ENCODE measurements at regions of chr6 and their contacts with region 1.

Region 1: GRCh38 chr6:32933636-32934085 is 7.2 kb downstream of the HLA-DMB start:
- DNase-seq: peak; percentile 80
- ATAC-seq: peak; percentile 68
- H3K4me3 Mint-ChIP-seq: no peak overlapping the region
- H3K27ac Mint-ChIP-seq: no peak overlapping the region
- H3K4me1 Mint-ChIP-seq: peaks cover 16% of the 10 kb centered on the region
- H3K27me3 Mint-ChIP-seq: peaks cover 12% of the 10 kb centered on the region

Region 2: GRCh38 chr6:32838114-32838958 is 95.3 kb before region 1 on chr6 and contains the start of gene TAP2:
- CTCF ChIA-PET with region 1: interaction called, 11 read pairs
- POLR2A ChIA-PET with region 1: no interaction called
- DNase-seq: peak; percentile 98
- ATAC-seq: peak; percentile 85
- H3K4me3 Mint-ChIP-seq: peak within 1 kb of the TSS; percentile 82
- H3K27ac Mint-ChIP-seq: peak within 1 kb of the TSS; percentile 99
- H3K4me1 Mint-ChIP-seq: peaks cover 80% of the 10 kb centered on the region
- H3K27me3 Mint-ChIP-seq: no peaks in the 10 kb centered on the region
- total RNA-seq, gene TAP2: 145 to 159 TPM

Region 3: DNA sequence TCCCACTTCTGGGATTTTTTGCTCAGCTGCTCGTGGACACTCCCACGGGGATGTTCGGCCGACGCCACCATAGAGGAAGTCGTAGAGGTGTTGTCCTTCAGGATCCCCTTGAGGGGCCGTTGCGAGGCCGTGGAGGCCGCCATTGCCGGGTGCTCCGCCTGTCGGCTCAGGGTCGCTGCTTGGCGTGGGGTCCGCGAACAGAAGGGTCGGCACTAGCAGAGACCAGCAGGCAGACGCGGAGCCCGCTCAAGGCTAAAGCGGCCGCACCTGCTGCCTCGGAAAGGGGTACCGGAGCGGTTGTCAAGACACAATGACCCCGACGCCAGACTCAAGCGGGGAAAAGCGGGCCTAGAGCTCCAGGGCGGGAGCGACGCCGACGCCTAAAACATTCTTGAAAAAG is 54.0 kb before region 1 on chr6:
- CTCF ChIA-PET with region 1: interaction called, 12 read pairs
- POLR2A ChIA-PET with region 1: no interaction called
- DNase-seq: no peak
- ATAC-seq: no peak
- H3K4me3 Mint-ChIP-seq: no peak overlapping the region
- H3K27ac Mint-ChIP-seq: no peak overlapping the region
- H3K4me1 Mint-ChIP-seq: no peaks in the 10 kb centered on the region
- H3K27me3 Mint-ChIP-seq: no peaks in the 10 kb centered on the region

Region 4: DNA sequence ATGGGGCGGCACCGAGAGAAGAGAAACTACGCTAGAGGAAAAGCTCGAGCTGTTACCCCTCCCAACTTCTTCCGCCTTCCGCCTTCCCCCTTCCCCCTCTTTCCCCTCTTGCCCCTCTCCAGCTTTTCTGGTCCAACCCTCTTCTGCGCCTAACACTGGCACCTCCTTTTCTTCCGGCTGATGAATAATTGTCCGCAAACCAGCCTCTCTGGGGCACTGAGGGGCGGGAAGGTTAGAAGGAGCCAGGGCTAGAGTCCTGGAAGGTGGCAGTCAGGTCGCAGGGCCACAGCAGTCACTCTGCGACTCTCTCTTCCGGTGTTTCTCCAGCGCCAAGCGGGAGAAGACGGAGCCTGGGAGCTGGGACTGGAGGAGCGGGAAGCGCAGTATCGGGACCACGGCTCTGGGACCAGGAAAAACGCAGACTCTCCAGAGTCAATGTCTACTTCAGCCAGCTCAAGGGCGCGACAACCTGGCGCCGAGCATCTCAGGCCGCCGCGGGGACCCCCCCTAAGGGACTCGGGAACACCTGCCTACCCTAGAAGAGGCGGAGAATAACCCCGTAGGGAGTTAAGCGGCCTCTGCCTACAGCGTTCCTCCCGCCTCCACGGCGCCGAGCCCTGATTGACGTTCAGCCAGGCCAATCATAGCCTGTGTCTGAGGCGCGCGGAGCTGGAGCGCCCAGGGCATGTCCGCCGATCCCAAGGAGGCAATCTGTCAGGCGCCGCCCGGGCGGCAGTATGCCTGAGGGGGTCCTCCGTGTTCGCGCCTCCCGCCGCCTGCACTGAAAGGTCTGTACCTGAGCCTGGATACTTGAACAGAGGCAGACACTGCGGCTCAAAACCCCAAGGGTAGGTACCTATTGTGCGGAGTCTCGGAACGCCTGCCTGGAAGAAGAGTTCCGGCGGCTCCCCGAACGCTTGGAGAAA is 39.3 kb before region 1 on chr6:
- CTCF ChIA-PET with region 1: interaction called, 25 read pairs
- POLR2A ChIA-PET with region 1: interaction called, 4 read pairs
- DNase-seq: peak; percentile 94
- ATAC-seq: peak; percentile 99
- H3K4me3 Mint-ChIP-seq: peak overlapping the region; percentile 98
- H3K27ac Mint-ChIP-seq: peak overlapping the region; percentile 94
- H3K4me1 Mint-ChIP-seq: peaks cover 37% of the 10 kb centered on the region
- H3K27me3 Mint-ChIP-seq: peaks cover 10% of the 10 kb centered on the region

Region 5: DNA sequence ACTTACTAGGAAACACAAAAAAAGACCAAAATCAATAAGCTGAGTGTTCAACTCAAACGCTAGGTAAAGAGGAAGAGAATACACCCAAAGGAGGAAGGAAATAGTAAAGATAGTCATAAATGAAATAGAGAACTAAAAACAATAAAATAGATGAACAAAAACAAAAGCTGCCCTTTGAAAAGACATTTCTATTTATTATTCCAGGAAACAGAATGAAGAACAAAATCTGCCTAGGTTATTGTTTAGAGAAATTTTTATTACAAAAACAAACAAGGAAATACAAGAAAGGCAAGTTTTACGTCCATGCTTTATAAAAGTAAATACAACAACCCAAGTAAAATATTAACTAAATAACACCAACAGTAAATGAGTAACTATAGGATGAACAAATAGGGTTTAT is 12.9 kb before region 1 on chr6:
- CTCF ChIA-PET with region 1: interaction called, 17 read pairs
- POLR2A ChIA-PET with region 1: no interaction called
- DNase-seq: no peak
- ATAC-seq: no peak
- H3K4me3 Mint-ChIP-seq: no peak overlapping the region
- H3K27ac Mint-ChIP-seq: no peak overlapping the region
- H3K4me1 Mint-ChIP-seq: peaks cover 1% of the 10 kb centered on the region
- H3K27me3 Mint-ChIP-seq: peaks cover 41% of the 10 kb centered on the region

Region 6: DNA sequence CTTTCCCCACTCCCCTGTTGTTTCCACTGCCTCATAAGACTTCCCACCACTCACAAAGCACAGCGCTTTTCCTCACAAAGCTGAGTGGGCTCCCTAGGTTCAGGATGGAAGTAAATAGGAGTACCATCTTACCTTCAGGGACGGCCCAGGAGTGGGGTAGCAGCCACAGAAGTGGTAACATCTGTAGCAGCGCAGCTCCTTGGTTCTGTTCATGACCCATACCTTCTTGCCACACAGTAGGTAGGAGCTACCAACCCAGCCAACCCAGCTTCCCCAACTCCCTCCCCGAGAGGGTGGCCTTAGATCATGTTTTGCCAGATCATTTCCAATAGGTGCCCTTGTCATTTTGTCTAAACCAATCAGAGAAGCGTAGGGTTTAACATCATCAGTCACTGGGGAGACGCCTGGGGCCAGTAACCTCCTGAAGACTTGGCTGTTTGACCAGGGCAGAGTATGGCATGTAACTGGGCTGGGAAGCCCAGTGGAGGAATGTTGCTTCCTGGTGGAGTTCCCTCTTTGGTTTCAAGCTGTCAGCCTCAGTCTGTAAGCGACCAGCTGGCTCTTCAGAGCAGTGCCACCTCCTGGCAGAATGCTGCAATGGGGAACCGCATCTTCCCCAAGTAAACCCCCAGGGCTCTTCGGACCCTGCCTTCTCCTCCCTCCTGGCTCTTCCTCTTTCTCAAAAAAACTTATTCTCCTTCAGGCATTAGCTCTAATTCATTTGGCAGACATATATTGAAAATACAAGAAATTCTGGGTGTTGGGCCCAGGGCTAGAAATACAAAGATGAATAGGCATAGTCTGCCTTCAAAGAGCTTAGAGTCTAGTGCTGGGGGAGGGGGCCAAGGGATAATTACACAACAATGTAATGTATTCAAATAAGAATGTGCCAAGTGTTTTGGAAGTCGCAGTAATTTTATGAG is 19.4 kb after region 1 on chr6 and contains the start of gene HLA-DMA:
- CTCF ChIA-PET with region 1: interaction called, 519 read pairs
- POLR2A ChIA-PET with region 1: interaction called, 8 read pairs
- DNase-seq: peak; percentile 85
- ATAC-seq: peak; percentile 98
- H3K4me3 Mint-ChIP-seq: peak within 1 kb of the TSS; percentile 77
- H3K27ac Mint-ChIP-seq: peak within 1 kb of the TSS; percentile 83
- H3K4me1 Mint-ChIP-seq: peaks cover 62% of the 10 kb centered on the region
- H3K27me3 Mint-ChIP-seq: no peaks in the 10 kb centered on the region
- total RNA-seq, gene HLA-DMA: 28.6 to 30.5 TPM

Measured in activated CD8-positive, alpha-beta T cell treated with anti-CD3 and anti-CD28 coated beads, Interleukin-2, amount 10 ng/mL, durations not matched to agents 7 days and 5 days (primary cell).